Activated naive CD4-positive, alpha-beta T cell treated with anti-CD3 and anti-CD28 coated beads for 36 hours (primary cell): ENCODE measurements at regions of chr20 and their contacts with region 1.

Region 1: GRCh38 chr20:3786665-3787323 is at the start of gene CENPB:
- DNase-seq: peak; percentile 91
- H3K4me3 Mint-ChIP-seq: peak within 1 kb of the TSS; percentile 83
- H3K27ac Mint-ChIP-seq: peak within 1 kb of the TSS; percentile 80
- H3K4me1 Mint-ChIP-seq: peaks cover 39% of the 10 kb centered on the region
- H3K27me3 Mint-ChIP-seq: no peaks in the 10 kb centered on the region
- total RNA-seq, gene CENPB: 29.1 to 30.3 TPM

Region 2: DNA sequence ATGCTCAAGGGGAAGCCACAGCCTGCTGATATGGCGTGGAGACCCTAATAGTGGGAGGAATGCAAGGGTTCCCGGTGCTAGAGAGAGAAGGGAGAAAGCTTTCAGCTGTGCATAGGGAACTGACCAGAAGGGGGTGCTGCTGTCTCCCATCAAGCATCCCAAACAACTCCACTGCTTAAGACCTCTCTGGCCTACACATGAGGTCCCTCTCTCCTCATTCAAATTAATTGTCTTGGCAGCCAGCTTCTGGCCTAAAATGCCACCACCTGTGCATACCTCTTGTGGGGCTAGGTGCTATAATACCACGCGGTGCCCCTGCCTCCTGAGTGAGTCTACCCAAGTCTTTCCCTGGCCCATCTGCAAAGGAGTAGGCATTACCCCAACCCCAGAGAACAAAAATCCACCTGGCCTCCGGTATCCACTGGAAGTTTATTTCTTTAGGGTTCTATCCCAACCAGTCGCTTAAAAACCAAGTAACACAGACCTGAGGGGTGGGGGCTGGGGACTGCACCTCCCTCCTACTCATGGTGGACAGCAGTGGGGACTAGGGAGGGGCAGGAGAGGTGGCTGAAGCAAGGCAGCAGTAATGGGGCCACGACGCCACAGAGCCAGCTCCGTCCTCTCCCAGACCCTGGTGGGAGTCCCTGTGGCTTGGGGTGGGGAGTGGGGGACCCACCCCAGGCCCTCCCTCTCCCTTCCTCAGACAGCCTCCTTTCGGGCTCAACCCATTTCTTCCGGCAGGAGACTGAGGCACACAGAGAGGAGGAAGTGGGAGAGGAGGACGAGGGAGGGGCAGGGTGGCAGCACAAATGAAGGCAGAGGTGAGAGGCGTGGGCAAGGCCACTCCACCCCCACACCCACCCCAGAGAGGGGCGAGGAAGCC is 33.5 kb before region 1 on chr20:
- CTCF ChIA-PET with region 1: interaction called, 5 read pairs
- intact Hi-C with region 1: loop called (anchors 2 kb)
- DNase-seq: peak; percentile 81
- H3K4me3 Mint-ChIP-seq: no peak overlapping the region
- H3K27ac Mint-ChIP-seq: no peak overlapping the region
- H3K4me1 Mint-ChIP-seq: peaks cover 7% of the 10 kb centered on the region
- H3K27me3 Mint-ChIP-seq: no peaks in the 10 kb centered on the region

Region 3: GRCh38 chr20:3811467-3812258 is 24.9 kb after region 1 on chr20:
- CTCF ChIA-PET with region 1: interaction called, 26 read pairs
- intact Hi-C with region 1: no loop called
- DNase-seq: peak; percentile 97
- H3K4me3 Mint-ChIP-seq: peak overlapping the region; percentile 86
- H3K27ac Mint-ChIP-seq: peak overlapping the region; percentile 97
- H3K4me1 Mint-ChIP-seq: peaks cover 70% of the 10 kb centered on the region
- H3K27me3 Mint-ChIP-seq: no peaks in the 10 kb centered on the region

Region 4: GRCh38 chr20:3820048-3820900 is 33.5 kb after region 1 on chr20 and contains the start of gene AP5S1:
- CTCF ChIA-PET with region 1: interaction called, 58 read pairs
- intact Hi-C with region 1: loop called (anchors 1 kb)
- DNase-seq: peak; percentile 96
- H3K4me3 Mint-ChIP-seq: peak within 1 kb of the TSS; percentile 85
- H3K27ac Mint-ChIP-seq: peak within 1 kb of the TSS; percentile 94
- H3K4me1 Mint-ChIP-seq: peaks cover 36% of the 10 kb centered on the region
- H3K27me3 Mint-ChIP-seq: no peaks in the 10 kb centered on the region
- total RNA-seq, gene AP5S1: 8.0 to 8.2 TPM

Region 5: GRCh38 chr20:3846740-3847428 is 60.1 kb after region 1 on chr20 and contains the start of gene MAVS:
- CTCF ChIA-PET with region 1: interaction called, 4 read pairs
- intact Hi-C with region 1: loop called (anchors 2 kb)
- DNase-seq: peak; percentile 84
- H3K4me3 Mint-ChIP-seq: peak within 1 kb of the TSS; percentile 85
- H3K27ac Mint-ChIP-seq: peak within 1 kb of the TSS; percentile 83
- H3K4me1 Mint-ChIP-seq: peaks cover 29% of the 10 kb centered on the region
- H3K27me3 Mint-ChIP-seq: no peaks in the 10 kb centered on the region
- total RNA-seq, gene MAVS: 14.8 to 16.0 TPM

Region 6: DNA sequence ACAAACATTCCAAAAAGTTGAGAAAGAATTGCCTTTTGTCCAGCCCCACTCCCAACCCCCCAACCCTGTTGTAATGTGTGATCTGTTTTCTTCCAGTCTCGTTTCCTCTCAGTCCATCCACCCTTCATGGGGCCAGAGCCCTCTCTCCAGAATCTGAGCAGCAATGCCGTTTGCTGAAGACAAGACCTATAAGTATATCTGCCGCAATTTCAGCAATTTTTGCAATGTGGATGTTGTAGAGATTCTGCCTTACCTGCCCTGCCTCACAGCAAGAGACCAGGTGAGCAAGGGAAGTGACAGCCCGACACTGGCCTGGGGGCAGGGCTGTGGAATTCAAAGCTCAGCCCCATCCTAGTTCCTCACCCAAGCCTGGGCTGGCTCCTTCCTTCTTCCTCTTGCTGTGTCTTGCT is 67.7 kb after region 1 on chr20:
- CTCF ChIA-PET with region 1: interaction called, 15 read pairs
- intact Hi-C with region 1: loop called (anchors 1 kb)
- DNase-seq: no peak
- H3K4me3 Mint-ChIP-seq: no peak overlapping the region
- H3K27ac Mint-ChIP-seq: no peak overlapping the region
- H3K4me1 Mint-ChIP-seq: peaks cover 9% of the 10 kb centered on the region
- H3K27me3 Mint-ChIP-seq: no peaks in the 10 kb centered on the region

Region 7: DNA sequence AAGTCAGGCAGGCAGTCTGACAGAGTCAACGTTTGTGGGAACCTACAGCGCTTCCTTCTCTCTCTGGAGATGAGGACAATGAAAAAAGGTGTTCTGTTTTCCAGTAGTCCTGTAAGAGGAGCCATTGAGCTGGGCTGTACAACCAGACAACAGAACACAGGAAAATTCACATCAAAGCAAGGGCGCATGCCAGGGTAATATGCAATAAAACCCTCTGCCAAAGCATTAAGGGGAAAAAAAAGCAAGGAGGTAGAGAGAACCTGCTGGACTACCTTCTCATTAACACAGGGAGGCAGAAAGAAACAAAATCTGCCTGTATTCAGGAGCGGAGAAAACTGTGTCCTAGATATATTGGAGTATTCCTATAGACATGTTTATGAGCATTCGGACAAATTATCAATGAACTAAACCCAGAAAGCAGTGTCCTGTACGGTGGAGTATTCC is 227.3 kb after region 1 on chr20:
- CTCF ChIA-PET with region 1: interaction called, 6 read pairs
- intact Hi-C with region 1: loop called (anchors 2 kb)
- DNase-seq: peak; percentile 52
- H3K4me3 Mint-ChIP-seq: peak overlapping the region; percentile 81
- H3K27ac Mint-ChIP-seq: no peak overlapping the region
- H3K4me1 Mint-ChIP-seq: peaks cover 32% of the 10 kb centered on the region
- H3K27me3 Mint-ChIP-seq: no peaks in the 10 kb centered on the region